ENCODE measurements at regions of chr6 and their contacts with region 1.

Region 1: DNA sequence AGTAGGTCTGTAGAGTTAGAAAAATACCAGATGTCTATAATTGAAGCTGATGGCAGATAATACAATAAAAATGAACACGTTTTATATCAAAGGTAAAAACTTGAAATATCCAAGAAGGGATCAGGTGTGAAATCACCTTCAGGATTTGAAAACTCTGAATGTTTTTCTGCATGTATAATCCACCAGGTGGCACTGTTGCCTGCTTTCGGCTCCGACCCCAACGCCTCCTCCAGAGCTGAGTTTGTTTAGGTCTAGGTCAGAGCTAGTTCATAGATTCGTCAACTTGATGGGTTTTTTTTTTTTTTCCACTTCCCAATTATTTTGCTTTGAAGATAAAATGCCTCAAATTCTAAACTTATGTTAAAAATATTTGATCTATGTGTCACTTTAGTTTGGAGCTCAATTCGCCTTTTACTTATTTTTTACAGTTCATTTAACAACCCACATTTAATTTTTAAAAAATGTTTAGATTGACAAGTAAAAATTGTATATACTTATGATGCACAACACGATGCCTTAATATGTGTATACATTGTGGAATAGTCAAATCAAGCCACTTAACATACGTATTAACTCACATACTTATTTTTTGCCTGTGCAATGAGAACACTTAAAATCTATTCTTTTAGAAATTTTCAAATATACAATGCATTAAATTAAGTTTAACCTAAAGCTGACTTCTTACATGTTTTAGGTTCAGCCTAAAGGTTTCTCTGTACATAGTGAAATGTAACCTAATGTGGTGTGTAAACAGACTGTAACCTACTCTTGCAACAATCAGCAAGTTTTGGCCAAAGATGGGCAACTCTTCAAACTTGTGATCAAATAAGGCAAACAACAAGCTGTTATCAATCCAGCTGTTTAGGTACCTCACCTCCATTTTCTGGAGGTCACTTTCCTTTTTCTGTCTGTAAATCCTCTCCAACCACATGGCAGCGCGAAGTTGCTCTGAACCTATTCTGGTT is 39.4 kb upstream of the ENPP4 start:
- DNase-seq: peak; percentile 50
- ATAC-seq: peak; percentile 80
- H3K4me3 ChIP-seq: no peak overlapping the region
- H3K27ac ChIP-seq: no peak overlapping the region
- H3K4me1 ChIP-seq: no peaks in the 10 kb centered on the region
- H3K27me3 ChIP-seq: no peaks in the 10 kb centered on the region
- CTCF ChIP-seq: peak; percentile 85
- EP300 ChIP-seq: no peak
- POLR2A ChIP-seq: no peak
- RAD21 ChIP-seq: no peak; the same call in 1 of the 2 replicates

Region 2: GRCh38 chr6:46023216-46023915 is 67.0 kb before region 1 on chr6:
- CTCF ChIA-PET with region 1: no interaction called
- POLR2A ChIA-PET with region 1: no interaction called
- in situ Hi-C with region 1: no loop called
- intact Hi-C with region 1: no loop called
- DNase-seq: no peak
- ATAC-seq: no peak
- H3K4me3 ChIP-seq: no peak overlapping the region
- H3K27ac ChIP-seq: no peak overlapping the region
- H3K4me1 ChIP-seq: no peaks in the 10 kb centered on the region
- H3K27me3 ChIP-seq: no peaks in the 10 kb centered on the region
- CTCF ChIP-seq: no peak
- EP300 ChIP-seq: no peak
- POLR2A ChIP-seq: no peak
- RAD21 ChIP-seq: no peak

Region 3: DNA sequence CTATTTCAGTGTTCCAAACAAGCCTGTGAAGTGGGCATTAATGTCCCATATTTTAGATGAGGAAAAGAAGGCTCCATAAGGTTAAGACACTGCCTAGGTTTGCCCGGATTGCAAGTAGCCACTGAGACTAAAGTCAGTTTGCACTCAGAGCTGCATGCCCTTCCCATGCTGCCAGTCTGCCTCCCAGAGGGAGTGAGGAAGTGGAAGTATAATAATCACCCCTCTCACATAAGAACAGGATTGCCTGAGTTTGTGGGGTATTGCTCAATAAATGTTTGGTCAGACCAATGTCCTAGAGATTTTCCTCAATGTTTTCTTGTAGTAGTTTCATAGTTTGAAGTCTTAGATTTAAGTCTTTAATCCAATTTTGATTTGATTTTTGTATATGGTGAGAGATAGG is 30.8 kb before region 1 on chr6:
- CTCF ChIA-PET with region 1: no interaction called
- POLR2A ChIA-PET with region 1: no interaction called
- in situ Hi-C with region 1: no loop called
- intact Hi-C with region 1: loop called (anchors 1 kb)
- DNase-seq: no peak
- ATAC-seq: no peak
- H3K4me3 ChIP-seq: no peak overlapping the region
- H3K27ac ChIP-seq: no peak overlapping the region
- H3K4me1 ChIP-seq: no peaks in the 10 kb centered on the region
- H3K27me3 ChIP-seq: no peaks in the 10 kb centered on the region
- CTCF ChIP-seq: no peak
- EP300 ChIP-seq: no peak
- POLR2A ChIP-seq: no peak
- RAD21 ChIP-seq: no peak

Region 4: GRCh38 chr6:46410334-46410953 is 320.0 kb after region 1 on chr6:
- CTCF ChIA-PET with region 1: interaction called, 33 read pairs
- POLR2A ChIA-PET with region 1: no interaction called
- in situ Hi-C with region 1: loop called (anchors 5 kb)
- intact Hi-C with region 1: loop called (anchors 1 kb)
- DNase-seq: peak; percentile 57
- ATAC-seq: no peak; the same call in 2 of the 3 replicates
- H3K4me3 ChIP-seq: no peak overlapping the region
- H3K27ac ChIP-seq: no peak overlapping the region
- H3K4me1 ChIP-seq: no peaks in the 10 kb centered on the region
- H3K27me3 ChIP-seq: no peaks in the 10 kb centered on the region
- CTCF ChIP-seq: peak; percentile 80
- EP300 ChIP-seq: no peak
- POLR2A ChIP-seq: no peak
- RAD21 ChIP-seq: peak; percentile 77

Region 5: DNA sequence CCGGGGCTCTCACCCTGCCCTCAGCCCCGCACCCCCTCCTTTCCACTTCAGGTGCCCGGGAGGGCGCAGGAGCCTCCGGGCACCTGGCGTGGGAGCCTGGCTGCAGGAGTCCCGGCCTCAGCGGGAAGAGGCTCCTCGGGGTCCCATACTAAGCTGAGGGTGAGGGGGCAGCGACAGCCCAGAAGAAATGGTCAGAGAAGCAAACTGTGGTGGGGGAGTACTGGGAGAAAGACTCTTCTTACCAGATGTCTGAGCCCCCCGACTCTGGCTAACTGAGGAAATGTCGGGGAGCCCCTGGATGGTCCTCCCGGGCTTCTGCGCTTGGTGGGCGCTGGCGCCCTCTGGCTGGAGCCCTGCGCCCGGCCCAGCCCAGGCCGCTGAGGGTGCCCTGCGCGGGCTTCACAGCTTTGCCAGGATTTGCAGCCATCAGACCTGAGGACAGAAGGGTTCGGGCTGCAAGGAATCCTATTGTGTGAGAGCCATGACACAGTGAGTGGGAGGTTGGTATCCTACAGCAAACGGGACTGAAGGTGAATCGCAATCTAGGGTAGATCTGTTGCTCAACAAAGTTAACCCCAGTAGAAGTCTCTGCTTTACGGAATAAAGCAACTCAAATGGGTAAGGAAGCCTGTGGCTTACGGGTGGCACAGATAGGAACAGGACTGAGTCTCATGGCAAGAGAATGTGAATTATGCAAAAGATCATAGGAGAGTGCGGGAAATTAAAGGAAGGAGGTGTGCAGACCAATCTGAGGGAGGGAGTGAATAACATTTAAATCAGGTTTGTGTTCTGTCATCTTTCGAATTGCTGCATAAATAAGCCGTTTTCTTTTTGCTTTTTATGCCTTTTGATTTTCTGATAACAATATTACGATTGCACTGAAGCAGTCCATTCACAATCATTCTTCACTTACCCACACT is 401.5 kb after region 1 on chr6:
- CTCF ChIA-PET with region 1: no interaction called
- POLR2A ChIA-PET with region 1: no interaction called
- in situ Hi-C with region 1: no loop called
- intact Hi-C with region 1: loop called (anchors 5 kb)
- DNase-seq: peak; percentile 6
- ATAC-seq: peak; percentile 95
- H3K4me3 ChIP-seq: peak overlapping the region; percentile 50 to 75 (median 73)
- H3K27ac ChIP-seq: no peak overlapping the region
- H3K4me1 ChIP-seq: peaks cover 5% of the 10 kb centered on the region
- H3K27me3 ChIP-seq: peaks cover 4 to 33% of the 10 kb centered on the region in 2 experiments; a peak in 4 of 5 replicates
- CTCF ChIP-seq: peak; percentile 72
- EP300 ChIP-seq: no peak
- POLR2A ChIP-seq: no peak
- RAD21 ChIP-seq: peak; percentile 48; the same call in 1 of the 2 replicates

Region 6: DNA sequence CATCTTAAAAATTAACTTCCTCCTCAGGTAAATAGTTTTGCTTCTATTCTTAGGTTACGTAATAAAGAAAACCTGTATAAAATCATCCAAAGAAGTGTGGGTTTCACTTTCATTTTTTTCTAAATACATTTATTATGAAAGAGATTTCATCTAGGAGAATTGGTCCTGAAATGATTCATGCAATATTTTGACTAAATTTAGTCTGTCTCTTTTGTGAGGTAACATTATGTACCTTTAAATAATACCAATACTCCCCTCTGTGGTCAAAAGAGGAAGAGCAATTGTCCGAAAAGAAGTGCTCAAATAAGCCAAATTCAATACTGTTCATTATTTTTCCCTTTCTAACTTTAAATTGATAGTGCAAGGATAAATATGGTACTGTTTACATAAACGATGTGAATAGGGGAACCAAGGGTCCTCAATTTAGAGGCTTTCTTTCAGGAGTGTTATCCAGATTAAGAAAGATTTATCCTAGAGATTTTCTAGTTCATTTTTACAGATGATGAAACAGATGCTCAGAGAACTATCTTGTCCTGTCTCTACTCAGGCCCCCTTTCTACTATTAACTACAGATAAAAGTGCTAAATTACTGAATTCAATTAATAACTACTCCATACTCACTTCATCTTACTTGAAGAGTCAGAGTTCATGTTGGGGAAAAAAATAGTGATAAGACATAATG is 536.0 kb after region 1 on chr6:
- CTCF ChIA-PET with region 1: interaction called, 8 read pairs
- POLR2A ChIA-PET with region 1: no interaction called
- in situ Hi-C with region 1: loop called (anchors 10 kb)
- intact Hi-C with region 1: loop called (anchors 1 kb)
- DNase-seq: peak; percentile 33
- ATAC-seq: peak; percentile 58
- H3K4me3 ChIP-seq: no peak overlapping the region
- H3K27ac ChIP-seq: no peak overlapping the region
- H3K4me1 ChIP-seq: no peaks in the 10 kb centered on the region
- H3K27me3 ChIP-seq: no peaks in the 10 kb centered on the region
- CTCF ChIP-seq: peak; percentile 63
- EP300 ChIP-seq: no peak
- POLR2A ChIP-seq: no peak
- RAD21 ChIP-seq: no peak

Region 7: DNA sequence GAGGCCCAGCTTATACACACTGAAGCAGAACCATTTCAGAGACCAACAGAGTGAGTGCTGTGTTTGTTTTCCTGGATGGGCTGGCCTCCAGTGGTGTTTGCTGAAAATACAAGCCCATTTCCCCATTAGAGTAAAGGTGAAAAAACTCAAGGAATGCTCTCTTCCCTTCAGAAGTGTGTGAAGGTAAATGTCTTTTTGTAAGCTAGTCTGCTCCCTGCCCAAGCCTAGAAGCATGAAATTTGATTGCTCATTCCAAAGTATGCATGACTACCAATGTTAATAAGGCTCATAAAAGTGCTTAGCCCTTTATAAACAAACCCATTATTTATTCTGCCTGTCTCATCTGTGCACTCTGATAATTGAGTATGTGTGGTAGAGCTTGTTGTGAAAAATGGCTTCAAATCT is 892.6 kb after region 1 on chr6:
- CTCF ChIA-PET with region 1: no interaction called
- POLR2A ChIA-PET with region 1: no interaction called
- in situ Hi-C with region 1: loop called (anchors 25 kb)
- intact Hi-C with region 1: no loop called
- DNase-seq: no peak
- ATAC-seq: peak; percentile 58
- H3K4me3 ChIP-seq: no peak overlapping the region
- H3K27ac ChIP-seq: no peak overlapping the region
- H3K4me1 ChIP-seq: peaks cover 9% of the 10 kb centered on the region; the same call in 1 of the 2 replicates
- H3K27me3 ChIP-seq: no peaks in the 10 kb centered on the region
- CTCF ChIP-seq: no peak
- EP300 ChIP-seq: no peak
- POLR2A ChIP-seq: no peak
- RAD21 ChIP-seq: no peak

Region 8: DNA sequence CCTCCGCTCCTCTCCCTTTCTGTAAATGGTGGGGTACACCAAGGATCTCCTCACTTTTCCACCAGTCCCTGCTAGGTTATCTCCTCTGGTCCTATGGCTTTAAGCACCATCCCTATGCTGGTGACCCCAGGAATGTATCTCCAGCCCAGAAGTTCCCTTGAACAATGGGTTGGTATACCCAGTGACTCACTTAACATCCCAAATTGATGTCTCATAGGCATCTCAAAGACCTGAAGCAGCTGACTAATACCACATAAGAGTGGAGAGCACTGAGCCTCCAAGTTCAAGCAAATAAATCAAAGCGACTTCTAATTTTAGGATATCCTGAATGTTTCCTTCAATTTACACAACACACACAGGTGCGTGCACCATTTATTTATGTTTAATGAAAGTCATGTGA is 903.4 kb after region 1 on chr6:
- CTCF ChIA-PET with region 1: interaction called, 4 read pairs
- POLR2A ChIA-PET with region 1: no interaction called
- in situ Hi-C with region 1: loop called (anchors 25 kb)
- intact Hi-C with region 1: loop called (anchors 5 kb)
- DNase-seq: peak; percentile 28
- ATAC-seq: no peak
- H3K4me3 ChIP-seq: no peak overlapping the region
- H3K27ac ChIP-seq: no peak overlapping the region
- H3K4me1 ChIP-seq: peaks cover 8% of the 10 kb centered on the region; the same call in 1 of the 2 replicates
- H3K27me3 ChIP-seq: peaks cover 0 to 26% of the 10 kb centered on the region in 2 experiments; a peak in 2 of 5 replicates
- CTCF ChIP-seq: no peak
- EP300 ChIP-seq: no peak
- POLR2A ChIP-seq: no peak
- RAD21 ChIP-seq: no peak

Measured in HepG2 (cell line).